SK-N-SH (cell line): ENCODE measurements at regions of chr6 and their contacts with region 1.

Region 1: DNA sequence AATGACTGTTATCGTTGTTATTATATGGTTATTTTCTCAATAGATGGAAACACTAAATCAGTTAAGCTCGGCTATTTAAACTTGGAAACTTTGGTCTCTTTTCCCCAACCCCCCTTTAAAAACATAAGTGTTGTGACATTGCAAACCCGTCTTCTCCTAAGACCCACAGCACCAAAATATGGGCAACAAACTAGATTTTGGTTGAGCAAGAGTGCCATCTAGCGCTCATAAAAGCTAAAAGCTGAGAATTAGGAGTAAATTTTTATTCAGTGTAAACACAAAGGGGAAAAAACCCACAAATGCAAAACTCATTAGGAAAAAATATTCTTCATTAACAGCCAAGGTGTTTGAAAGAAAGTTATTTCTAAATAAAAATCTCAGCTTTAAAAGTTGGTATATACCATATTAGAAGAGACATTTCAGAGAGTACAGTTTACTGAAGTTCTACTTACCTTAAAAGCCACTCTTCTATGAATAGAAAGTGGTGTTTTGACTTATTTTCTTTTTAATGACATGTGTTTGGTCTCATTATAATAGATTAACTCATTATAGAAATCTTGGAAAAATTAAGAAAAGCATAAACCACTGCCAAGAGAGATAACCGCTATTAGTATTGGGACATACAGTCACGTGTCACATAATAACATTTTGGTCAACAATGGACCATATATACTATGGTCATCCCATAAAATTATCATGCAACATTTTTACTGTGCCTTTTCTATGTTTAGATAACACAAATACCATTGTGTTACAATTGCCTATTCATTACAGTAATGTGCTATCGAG is 21.1 kb downstream of the SESN1 start:
- DNase-seq: peak; percentile 55
- H3K4me3 ChIP-seq: peak overlapping the region in 1 of 2 experiments; percentile 25; a peak in 1 of 4 replicates
- H3K27ac ChIP-seq: no peak overlapping the region
- H3K4me1 ChIP-seq: peaks cover 0 to 22% of the 10 kb centered on the region in 2 experiments; a peak in 2 of 4 replicates
- H3K27me3 ChIP-seq: no peaks in the 10 kb centered on the region
- CTCF ChIP-seq: peak; percentile 76
- EP300 ChIP-seq: no peak
- RAD21 ChIP-seq: peak; percentile 93

Region 2: GRCh38 chr6:108541838-108542759 is 531.4 kb before region 1 on chr6:
- CTCF ChIA-PET with region 1: interaction called, 115 read pairs
- POLR2A ChIA-PET with region 1: interaction called, 6 read pairs
- DNase-seq: peak; percentile 65
- H3K4me3 ChIP-seq: no peak overlapping the region; a peak in 1 of 4 replicates
- H3K27ac ChIP-seq: peak overlapping the region in 1 of 2 experiments; percentile 34; a peak in 1 of 4 replicates
- H3K4me1 ChIP-seq: peaks cover 0 to 13% of the 10 kb centered on the region in 2 experiments; a peak in 1 of 4 replicates
- H3K27me3 ChIP-seq: no peaks in the 10 kb centered on the region
- CTCF ChIP-seq: peak; percentile 92
- EP300 ChIP-seq: 0 out of 4 replicates have a peak, but pooled peaks of 1 of the 2 experiments have one; percentile 19
- RAD21 ChIP-seq: peak; percentile 99

Region 3: DNA sequence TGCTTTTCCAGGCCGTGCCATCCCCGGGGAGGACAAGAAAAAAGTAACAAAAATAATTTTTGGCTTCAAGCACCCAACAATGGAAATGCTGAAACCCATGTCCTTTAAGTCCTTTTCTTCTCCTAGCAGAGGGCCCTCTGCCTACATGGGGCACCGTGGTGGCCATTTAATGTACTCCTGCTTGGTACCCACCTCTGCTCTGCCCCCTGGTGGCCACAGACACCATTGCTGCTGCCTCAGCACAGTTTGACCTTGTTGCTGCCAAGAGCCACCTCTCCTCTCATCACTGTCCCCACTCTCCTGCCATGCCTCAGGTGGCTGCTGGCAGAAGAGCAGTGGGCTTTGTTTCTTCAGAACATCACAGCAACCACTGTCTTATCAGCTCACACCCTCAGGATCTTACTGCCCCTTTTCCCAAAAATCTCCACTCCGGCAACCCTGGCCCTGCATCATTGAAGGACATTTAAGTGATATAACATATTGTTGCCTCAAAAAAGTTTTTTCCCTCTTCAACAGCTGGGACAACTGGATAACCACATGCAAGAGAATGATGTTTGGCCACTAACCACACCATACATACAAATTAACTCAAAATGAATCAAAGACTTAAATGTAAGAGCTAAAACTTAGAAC is 238.2 kb before region 1 on chr6:
- CTCF ChIA-PET with region 1: interaction called, 20 read pairs
- POLR2A ChIA-PET with region 1: no interaction called
- DNase-seq: peak; percentile 89
- H3K4me3 ChIP-seq: no peak overlapping the region; a peak in 1 of 4 replicates
- H3K27ac ChIP-seq: peak overlapping the region in 1 of 2 experiments; percentile 62; a peak in 2 of 4 replicates
- H3K4me1 ChIP-seq: peaks cover 0 to 13% of the 10 kb centered on the region in 2 experiments; a peak in 2 of 4 replicates
- H3K27me3 ChIP-seq: no peaks in the 10 kb centered on the region
- CTCF ChIP-seq: peak; percentile 93
- EP300 ChIP-seq: no peak
- RAD21 ChIP-seq: peak; percentile 91

Region 4: GRCh38 chr6:109009236-109009961 is 64.1 kb before region 1 on chr6:
- CTCF ChIA-PET with region 1: interaction called, 17 read pairs
- POLR2A ChIA-PET with region 1: no interaction called
- DNase-seq: peak; percentile 93
- H3K4me3 ChIP-seq: peak overlapping the region; percentile 71 to 95
- H3K27ac ChIP-seq: peak overlapping the region; percentile 50 to 94
- H3K4me1 ChIP-seq: peaks cover 0 to 6% of the 10 kb centered on the region in 2 experiments; a peak in 1 of 4 replicates
- H3K27me3 ChIP-seq: no peaks in the 10 kb centered on the region
- CTCF ChIP-seq: no peak
- EP300 ChIP-seq: no peak
- RAD21 ChIP-seq: no peak

Region 5: GRCh38 chr6:109083657-109084056 is 10.1 kb after region 1 on chr6:
- CTCF ChIA-PET with region 1: interaction called, 16 read pairs
- POLR2A ChIA-PET with region 1: no interaction called
- DNase-seq: no peak
- H3K4me3 ChIP-seq: no peak overlapping the region
- H3K27ac ChIP-seq: no peak overlapping the region
- H3K4me1 ChIP-seq: peaks cover 0 to 12% of the 10 kb centered on the region in 2 experiments; a peak in 2 of 4 replicates
- H3K27me3 ChIP-seq: no peaks in the 10 kb centered on the region
- CTCF ChIP-seq: no peak
- EP300 ChIP-seq: no peak
- RAD21 ChIP-seq: no peak

Region 6: DNA sequence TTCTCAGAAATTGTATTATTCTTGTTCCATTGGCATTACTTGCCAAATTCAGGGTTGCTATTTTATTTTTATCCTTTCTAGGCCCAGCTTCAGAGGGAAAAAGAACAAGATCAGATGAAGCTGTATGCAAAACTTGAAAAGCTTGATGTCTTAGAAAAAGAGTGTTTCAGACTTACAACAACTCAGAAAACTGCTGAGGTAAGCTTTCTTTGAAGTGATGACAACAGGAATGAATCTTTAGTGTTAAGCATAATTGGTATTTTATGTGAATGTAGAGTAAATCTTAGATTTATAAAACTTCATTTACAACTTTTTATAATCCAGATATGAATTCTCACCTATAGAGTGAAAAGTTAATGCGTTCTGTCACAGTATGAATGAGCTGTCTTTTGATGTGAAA is 80.2 kb after region 1 on chr6:
- CTCF ChIA-PET with region 1: no interaction called
- POLR2A ChIA-PET with region 1: no interaction called
- DNase-seq: no peak
- H3K4me3 ChIP-seq: no peak overlapping the region
- H3K27ac ChIP-seq: no peak overlapping the region
- H3K4me1 ChIP-seq: no peaks in the 10 kb centered on the region
- H3K27me3 ChIP-seq: no peaks in the 10 kb centered on the region
- CTCF ChIP-seq: no peak
- EP300 ChIP-seq: no peak
- RAD21 ChIP-seq: no peak